Caco-2 (cell line): ENCODE measurements at regions of chr19 and their contacts with region 1.

Region 1: DNA sequence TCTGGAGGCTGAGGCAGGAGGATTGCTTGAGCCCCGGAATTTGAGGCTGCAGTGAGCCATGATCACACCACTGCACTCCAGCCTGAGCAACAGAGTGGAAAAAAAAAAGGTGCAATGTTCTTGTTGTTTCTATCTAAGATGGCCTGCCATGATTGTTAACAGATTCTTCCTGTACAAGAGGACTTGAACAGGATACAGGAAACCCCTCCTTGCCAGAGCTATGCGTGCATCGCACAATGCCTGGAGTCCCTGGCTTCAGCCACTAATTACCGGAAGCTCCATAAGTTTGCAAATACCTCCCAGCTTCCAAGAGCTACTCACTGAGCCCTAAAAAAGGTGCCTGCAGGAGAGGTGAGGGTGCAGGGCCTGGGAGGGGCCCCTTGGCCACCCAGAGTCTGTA is 13.1 kb upstream of the HIF3A start:
- DNase-seq: no peak
- H3K4me3 ChIP-seq: no peak overlapping the region
- H3K4me3 Mint-ChIP-seq: no peak overlapping the region
- H3K27ac Mint-ChIP-seq: no peak overlapping the region
- H3K4me1 ChIP-seq: no peaks in the 10 kb centered on the region
- H3K4me1 Mint-ChIP-seq: no peaks in the 10 kb centered on the region
- H3K27me3 ChIP-seq: no peaks in the 10 kb centered on the region
- H3K27me3 Mint-ChIP-seq: no peaks in the 10 kb centered on the region
- CTCF ChIP-seq: no peak

Region 2: GRCh38 chr19:45827459-45828093 is 456.2 kb before region 1 on chr19:
- CTCF ChIA-PET with region 1: no interaction called
- POLR2A ChIA-PET with region 1: no interaction called
- intact Hi-C with region 1: no loop called
- DNase-seq: no peak
- H3K4me3 ChIP-seq: no peak overlapping the region
- H3K4me3 Mint-ChIP-seq: no peak overlapping the region
- H3K27ac Mint-ChIP-seq: no peak overlapping the region
- H3K4me1 ChIP-seq: no peaks in the 10 kb centered on the region
- H3K4me1 Mint-ChIP-seq: no peaks in the 10 kb centered on the region
- H3K27me3 ChIP-seq: no peaks in the 10 kb centered on the region
- H3K27me3 Mint-ChIP-seq: no peaks in the 10 kb centered on the region
- CTCF ChIP-seq: no peak

Region 3: DNA sequence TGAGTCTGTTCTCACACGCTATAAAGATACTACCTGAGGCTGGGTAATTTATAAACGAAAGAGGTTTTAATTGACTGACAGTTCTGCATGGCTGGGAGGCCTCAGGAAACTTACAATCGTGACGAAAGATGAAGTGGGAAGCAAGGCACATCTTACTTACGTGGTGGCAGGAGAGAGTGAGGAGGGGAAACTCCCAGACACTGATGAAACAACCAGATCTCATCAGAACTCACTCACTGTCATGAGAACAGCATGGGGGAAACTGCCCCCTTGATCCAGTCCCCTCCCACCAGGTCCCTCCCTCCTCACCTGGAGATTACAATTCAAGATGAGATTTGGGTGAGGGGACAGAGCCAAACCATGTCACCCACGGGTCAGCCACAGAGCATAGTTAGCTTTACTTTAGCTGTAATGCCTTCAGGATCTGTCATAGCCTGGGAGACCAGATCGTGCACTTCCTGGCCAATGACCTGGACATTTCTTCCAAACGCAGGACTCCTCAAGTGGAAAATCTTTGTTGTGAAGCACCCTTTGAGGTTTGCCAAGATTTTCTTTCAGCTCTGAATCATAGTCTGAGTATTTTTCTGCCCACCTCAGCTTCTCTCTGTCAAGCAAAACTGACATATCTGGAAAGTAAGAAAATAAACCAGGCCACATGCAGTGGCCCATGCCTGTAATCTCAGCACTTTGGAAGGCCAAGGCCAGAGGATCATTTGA is 12.1 kb before region 1 on chr19:
- CTCF ChIA-PET with region 1: interaction called, 13 read pairs
- POLR2A ChIA-PET with region 1: no interaction called
- intact Hi-C with region 1: no loop called
- DNase-seq: no peak
- H3K4me3 ChIP-seq: no peak overlapping the region
- H3K4me3 Mint-ChIP-seq: no peak overlapping the region
- H3K27ac Mint-ChIP-seq: no peak overlapping the region
- H3K4me1 ChIP-seq: peaks cover 11% of the 10 kb centered on the region
- H3K4me1 Mint-ChIP-seq: no peaks in the 10 kb centered on the region
- H3K27me3 ChIP-seq: no peaks in the 10 kb centered on the region
- H3K27me3 Mint-ChIP-seq: no peaks in the 10 kb centered on the region
- CTCF ChIP-seq: no peak

Region 4: GRCh38 chr19:46346821-46347571 is 63.2 kb after region 1 on chr19 and contains the start of gene PPP5C:
- CTCF ChIA-PET with region 1: no interaction called
- POLR2A ChIA-PET with region 1: no interaction called
- intact Hi-C with region 1: loop called (anchors 2 kb)
- DNase-seq: peak; percentile 96 to 97
- H3K4me3 ChIP-seq: peak within 1 kb of the TSS; percentile 70
- H3K4me3 Mint-ChIP-seq: peak within 1 kb of the TSS; percentile 92
- H3K27ac Mint-ChIP-seq: peak within 1 kb of the TSS; percentile 78
- H3K4me1 ChIP-seq: peaks cover 4% of the 10 kb centered on the region; the same call in 1 of the 2 replicates
- H3K4me1 Mint-ChIP-seq: peaks cover 28% of the 10 kb centered on the region
- H3K27me3 ChIP-seq: no peaks in the 10 kb centered on the region
- H3K27me3 Mint-ChIP-seq: peaks cover 3% of the 10 kb centered on the region
- CTCF ChIP-seq: peak; percentile 79 to 95
- total RNA-seq, gene PPP5C: 120 and 130 TPM in 2 replicates

Region 5: GRCh38 chr19:46404055-46404752 is 120.4 kb after region 1 on chr19:
- CTCF ChIA-PET with region 1: interaction called, 5 read pairs
- POLR2A ChIA-PET with region 1: no interaction called
- intact Hi-C with region 1: loop called (anchors 5 kb)
- DNase-seq: peak; percentile 80 to 81
- H3K4me3 ChIP-seq: peak overlapping the region; percentile 55
- H3K4me3 Mint-ChIP-seq: peak overlapping the region; percentile 97
- H3K27ac Mint-ChIP-seq: peak overlapping the region; percentile 95
- H3K4me1 ChIP-seq: no peaks in the 10 kb centered on the region
- H3K4me1 Mint-ChIP-seq: peaks cover 14% of the 10 kb centered on the region
- H3K27me3 ChIP-seq: no peaks in the 10 kb centered on the region
- H3K27me3 Mint-ChIP-seq: no peaks in the 10 kb centered on the region
- CTCF ChIP-seq: peak; percentile 29 to 44

Region 6: DNA sequence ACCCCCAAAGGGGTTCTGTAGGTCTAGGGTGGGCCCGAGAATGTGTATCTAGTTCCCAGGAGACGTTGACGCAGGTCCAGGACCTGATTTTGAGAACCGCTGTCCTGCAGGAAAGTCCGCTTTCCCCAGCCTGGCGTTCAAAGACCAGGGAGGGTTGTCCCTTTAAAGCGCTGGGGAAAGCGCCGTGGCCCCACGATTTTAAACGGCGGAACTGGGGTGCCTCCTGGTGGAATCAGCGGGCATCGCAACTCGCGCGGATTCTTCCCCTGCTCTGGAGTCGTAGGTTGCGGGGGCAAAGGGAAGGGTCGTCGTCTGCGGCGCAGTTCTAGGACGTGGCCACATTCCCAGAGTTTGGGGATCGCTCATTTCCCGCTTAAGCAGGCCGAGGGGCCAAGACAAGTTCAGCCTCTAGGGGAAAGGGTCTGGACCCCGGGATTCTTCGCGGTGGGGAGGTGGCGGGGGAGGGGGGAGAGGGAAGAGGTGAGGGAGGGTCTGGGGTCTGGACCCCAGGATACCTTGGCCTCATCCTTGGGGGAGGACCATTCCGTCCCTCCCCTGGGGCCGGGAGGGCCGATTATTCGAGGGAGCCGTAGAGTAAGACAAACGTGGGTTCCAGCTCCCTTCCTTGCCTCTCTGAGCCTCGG is 204.2 kb after region 1 on chr19:
- CTCF ChIA-PET with region 1: interaction called, 11 read pairs
- POLR2A ChIA-PET with region 1: no interaction called
- intact Hi-C with region 1: loop called (anchors 2 kb)
- DNase-seq: peak; percentile 71 to 86
- H3K4me3 ChIP-seq: peak overlapping the region; percentile 22
- H3K4me3 Mint-ChIP-seq: peak overlapping the region; percentile 43
- H3K27ac Mint-ChIP-seq: no peak overlapping the region
- H3K4me1 ChIP-seq: no peaks in the 10 kb centered on the region
- H3K4me1 Mint-ChIP-seq: no peaks in the 10 kb centered on the region
- H3K27me3 ChIP-seq: peaks cover 1% of the 10 kb centered on the region
- H3K27me3 Mint-ChIP-seq: peaks cover 13% of the 10 kb centered on the region
- CTCF ChIP-seq: peak; percentile 93 to 94